ENCODE measurements at regions of chr5 and their contacts with region 1.

Region 1: DNA sequence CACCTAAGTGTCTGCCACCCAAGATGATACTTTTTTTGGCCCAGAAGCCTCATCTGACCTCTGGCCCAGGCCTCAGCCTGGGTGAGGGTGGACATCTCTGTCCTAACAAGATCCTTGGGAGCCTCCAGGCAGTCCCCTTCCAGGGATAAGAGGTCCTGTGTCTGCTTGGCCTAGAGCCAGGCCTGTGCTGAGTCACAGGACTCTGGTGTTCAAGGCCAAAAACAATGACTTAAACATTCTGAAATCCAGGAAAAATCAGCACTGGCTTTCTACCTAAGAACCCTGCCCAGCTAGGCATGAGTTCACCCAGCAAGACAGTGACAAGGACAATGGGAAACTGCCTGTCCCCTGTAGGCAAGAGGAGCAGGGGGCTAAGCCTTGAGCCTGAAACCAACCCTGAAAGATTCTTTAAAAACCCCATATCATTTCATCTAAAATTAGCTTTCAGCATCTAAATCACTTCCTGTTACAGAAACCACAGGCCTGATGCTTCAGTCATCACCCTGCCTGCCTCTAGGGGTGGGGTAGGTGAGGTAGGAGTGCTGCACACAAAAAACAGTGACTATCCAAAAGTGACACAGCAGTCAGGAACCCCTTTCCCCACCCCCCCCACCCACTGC is 29.9 kb downstream of the CSF2 start:
- DNase-seq: peak; percentile 81 to 93 (median 86)
- H3K4me3 ChIP-seq: peak overlapping the region; percentile 33 to 40
- H3K4me3 Mint-ChIP-seq: peak overlapping the region; percentile 46 to 74 (median 70)
- H3K27ac ChIP-seq: peak overlapping the region; percentile 80
- H3K27ac Mint-ChIP-seq: peak overlapping the region; percentile 88 to 99 (median 94)
- H3K4me1 ChIP-seq: peaks cover 77% of the 10 kb centered on the region
- H3K4me1 Mint-ChIP-seq: peaks cover 61 to 86% (median 74%) of the 10 kb centered on the region in 4 donors
- H3K27me3 ChIP-seq: no peaks in the 10 kb centered on the region
- H3K27me3 Mint-ChIP-seq: no peaks in the 10 kb centered on the region

Region 2: GRCh38 chr5:132086277-132086794 is 17.1 kb before region 1 on chr5:
- CTCF ChIA-PET with region 1: interaction called, 17 read pairs
- POLR2A ChIA-PET with region 1: interaction called, 20 read pairs
- intact Hi-C with region 1: no loop called
- DNase-seq: no peak
- H3K4me3 ChIP-seq: no peak overlapping the region
- H3K4me3 Mint-ChIP-seq: no peak overlapping the region
- H3K27ac ChIP-seq: no peak overlapping the region
- H3K27ac Mint-ChIP-seq: peak overlapping the region in 1 of 7 donors; percentile 56
- H3K4me1 ChIP-seq: peaks cover 28% of the 10 kb centered on the region
- H3K4me1 Mint-ChIP-seq: peaks cover 20 to 72% (median 45%) of the 10 kb centered on the region in 4 donors
- H3K27me3 ChIP-seq: no peaks in the 10 kb centered on the region
- H3K27me3 Mint-ChIP-seq: no peaks in the 10 kb centered on the region

Region 3: DNA sequence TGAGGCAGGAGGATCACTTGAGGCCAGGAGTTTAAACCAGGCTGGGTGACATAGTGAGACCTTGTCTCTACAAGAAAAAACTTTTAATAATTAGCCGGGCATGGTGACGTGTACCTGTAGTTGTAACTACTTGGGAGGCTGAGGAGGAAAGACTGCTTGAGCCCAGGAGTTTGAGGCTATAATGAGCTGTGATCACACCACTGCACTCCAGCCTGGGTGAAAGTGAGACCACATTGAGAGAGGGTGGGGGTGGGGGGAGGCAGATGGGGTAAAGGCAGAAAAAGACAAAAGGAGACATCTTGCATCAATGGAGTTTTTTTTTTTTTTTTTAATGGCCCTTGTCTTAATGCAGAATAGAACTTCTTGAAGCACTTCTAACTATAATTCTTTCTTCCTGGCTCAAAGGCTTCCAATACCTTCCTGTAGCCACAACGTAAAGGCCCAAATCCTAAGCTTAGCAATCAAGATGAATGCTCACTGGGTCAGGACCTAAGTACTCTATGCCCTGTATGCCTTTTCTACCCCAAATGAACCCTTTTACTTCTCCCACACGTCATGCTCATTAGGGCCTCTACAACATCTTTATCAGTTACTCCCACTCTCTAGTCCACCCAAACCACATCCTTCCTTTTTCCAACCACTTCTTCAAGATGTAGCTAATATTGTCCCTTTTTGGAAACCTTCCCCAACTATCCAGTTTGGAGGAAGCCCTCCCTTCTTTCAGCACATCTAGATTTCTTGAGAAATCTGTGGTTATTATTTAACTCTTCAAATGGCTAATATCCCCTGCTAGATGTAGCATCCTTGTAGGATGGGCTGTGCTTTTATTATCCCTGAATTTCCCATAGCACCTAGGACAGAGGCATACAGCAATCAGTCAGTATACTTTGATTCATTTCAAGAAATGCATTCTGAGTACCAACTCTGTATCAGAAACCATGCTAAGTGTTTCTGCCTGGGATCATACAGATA is 11.0 kb after region 1 on chr5:
- CTCF ChIA-PET with region 1: interaction called, 9 read pairs
- POLR2A ChIA-PET with region 1: interaction called, 27 read pairs
- intact Hi-C with region 1: loop called (anchors 2 kb)
- DNase-seq: no peak
- H3K4me3 ChIP-seq: no peak overlapping the region
- H3K4me3 Mint-ChIP-seq: peak overlapping the region in 5 of 8 donors; percentile 12 to 62 (median 37)
- H3K27ac ChIP-seq: no peak overlapping the region
- H3K27ac Mint-ChIP-seq: peak overlapping the region in 4 of 7 donors; percentile 6 to 77 (median 70)
- H3K4me1 ChIP-seq: peaks cover 77% of the 10 kb centered on the region
- H3K4me1 Mint-ChIP-seq: peaks cover 50 to 71% (median 57%) of the 10 kb centered on the region in 4 donors
- H3K27me3 ChIP-seq: no peaks in the 10 kb centered on the region
- H3K27me3 Mint-ChIP-seq: no peaks in the 10 kb centered on the region

Region 4: GRCh38 chr5:132134384-132134783 is 30.9 kb after region 1 on chr5:
- CTCF ChIA-PET with region 1: interaction called, 13 read pairs
- POLR2A ChIA-PET with region 1: interaction called, 6 read pairs
- intact Hi-C with region 1: loop called (anchors 1 kb)
- DNase-seq: peak in 4 of 5 donors; percentile 21 to 31 (median 28)
- H3K4me3 ChIP-seq: no peak overlapping the region
- H3K4me3 Mint-ChIP-seq: no peak overlapping the region
- H3K27ac ChIP-seq: no peak overlapping the region
- H3K27ac Mint-ChIP-seq: peak overlapping the region in 2 of 7 donors; percentile 26 to 70
- H3K4me1 ChIP-seq: no peaks in the 10 kb centered on the region
- H3K4me1 Mint-ChIP-seq: peaks cover 0 to 12% (median 0%) of the 10 kb centered on the region in 4 donors
- H3K27me3 ChIP-seq: no peaks in the 10 kb centered on the region
- H3K27me3 Mint-ChIP-seq: peaks cover 1 to 4% of the 10 kb centered on the region in 2 donors

Region 5: DNA sequence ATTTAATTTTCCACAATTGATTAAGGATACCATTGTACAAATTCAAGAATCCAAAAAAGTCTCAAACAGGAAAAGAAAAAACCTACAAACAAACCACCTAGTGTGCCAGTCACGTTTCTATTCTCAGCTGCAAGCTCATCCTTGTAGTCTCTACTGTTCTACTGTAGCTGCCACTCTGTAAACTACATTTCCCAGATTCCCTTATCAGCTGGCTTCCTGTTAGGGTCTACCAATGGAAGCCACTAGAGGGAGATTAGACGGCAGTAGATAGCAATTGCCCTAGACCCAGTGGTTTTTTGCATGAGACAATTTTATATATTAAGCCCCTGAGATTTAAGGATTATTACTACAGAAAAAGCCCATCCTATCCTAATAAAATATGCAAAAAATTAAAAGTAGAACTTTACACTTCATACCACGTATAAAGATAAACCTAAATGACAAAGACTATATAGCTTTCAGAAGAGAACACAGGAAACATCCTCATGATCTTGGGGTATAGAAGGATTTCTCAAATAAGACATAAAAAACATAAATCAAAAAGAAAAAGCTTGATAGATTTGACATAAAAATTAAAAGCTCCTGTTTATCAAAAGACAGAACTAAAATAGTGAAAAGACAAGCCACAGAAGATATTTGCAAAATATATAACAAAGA is 86.8 kb after region 1 on chr5:
- CTCF ChIA-PET with region 1: interaction called, 7 read pairs
- POLR2A ChIA-PET with region 1: no interaction called
- intact Hi-C with region 1: loop called (anchors 5 kb)
- DNase-seq: peak; percentile 37 to 54 (median 46)
- H3K4me3 ChIP-seq: no peak overlapping the region
- H3K4me3 Mint-ChIP-seq: no peak overlapping the region
- H3K27ac ChIP-seq: no peak overlapping the region
- H3K27ac Mint-ChIP-seq: peak overlapping the region in 1 of 7 donors; percentile 4
- H3K4me1 ChIP-seq: no peaks in the 10 kb centered on the region
- H3K4me1 Mint-ChIP-seq: peaks cover 0 to 4% (median 1%) of the 10 kb centered on the region in 4 donors
- H3K27me3 ChIP-seq: no peaks in the 10 kb centered on the region
- H3K27me3 Mint-ChIP-seq: peaks cover 3 to 7% of the 10 kb centered on the region in 2 donors

Measured in CD4-positive, alpha-beta memory T cell (primary cell).